ENCODE measurements at regions of chr1 and their contacts with region 1.

Region 1: DNA sequence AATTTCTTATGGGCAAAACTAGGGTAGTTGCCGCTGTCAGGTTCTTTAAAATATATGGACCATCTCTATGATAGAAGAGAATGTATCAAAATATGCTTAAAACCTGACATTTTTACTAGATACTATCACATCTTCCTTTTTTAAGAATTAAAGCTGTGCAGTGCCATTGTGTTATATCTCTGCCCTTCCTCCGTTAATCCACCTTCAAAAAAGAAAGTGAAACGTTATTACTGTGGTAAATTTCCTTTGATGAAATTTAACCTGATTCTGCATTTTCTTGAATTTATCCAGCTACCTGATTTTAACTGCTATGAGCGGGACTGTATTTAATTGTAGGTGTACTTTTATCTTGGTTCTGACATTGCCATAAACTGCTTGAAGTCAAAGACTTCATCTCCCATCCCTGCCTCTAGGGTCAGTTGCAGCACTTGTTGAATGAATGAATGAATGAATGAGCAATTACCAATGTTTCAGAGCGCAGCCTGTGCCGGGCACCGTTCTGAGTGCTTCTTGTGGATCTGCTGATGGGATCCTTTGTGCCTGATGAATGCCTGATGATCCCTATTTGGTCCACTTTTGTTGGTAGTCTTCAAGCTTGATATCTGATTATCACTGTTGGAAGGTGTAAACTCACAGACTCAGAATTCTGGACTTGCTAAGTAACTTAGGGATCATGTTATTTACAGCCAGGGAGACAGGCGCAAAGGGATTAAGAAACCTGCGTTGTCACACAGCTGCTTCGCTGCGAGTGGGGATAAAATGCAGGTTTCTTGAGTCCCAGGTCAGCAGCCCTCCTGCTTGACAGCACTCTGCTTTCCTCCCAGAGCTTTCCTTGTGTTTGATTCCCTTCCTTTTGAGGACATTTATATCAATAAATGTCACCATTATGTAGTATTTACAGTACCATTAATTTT is 30.1 kb downstream of the SMYD2 start:
- DNase-seq: no peak
- H3K4me3 Mint-ChIP-seq: peak overlapping the region; percentile 69
- H3K27ac Mint-ChIP-seq: no peak overlapping the region
- H3K4me1 Mint-ChIP-seq: peaks cover 24% of the 10 kb centered on the region
- H3K27me3 Mint-ChIP-seq: no peaks in the 10 kb centered on the region

Region 2: DNA sequence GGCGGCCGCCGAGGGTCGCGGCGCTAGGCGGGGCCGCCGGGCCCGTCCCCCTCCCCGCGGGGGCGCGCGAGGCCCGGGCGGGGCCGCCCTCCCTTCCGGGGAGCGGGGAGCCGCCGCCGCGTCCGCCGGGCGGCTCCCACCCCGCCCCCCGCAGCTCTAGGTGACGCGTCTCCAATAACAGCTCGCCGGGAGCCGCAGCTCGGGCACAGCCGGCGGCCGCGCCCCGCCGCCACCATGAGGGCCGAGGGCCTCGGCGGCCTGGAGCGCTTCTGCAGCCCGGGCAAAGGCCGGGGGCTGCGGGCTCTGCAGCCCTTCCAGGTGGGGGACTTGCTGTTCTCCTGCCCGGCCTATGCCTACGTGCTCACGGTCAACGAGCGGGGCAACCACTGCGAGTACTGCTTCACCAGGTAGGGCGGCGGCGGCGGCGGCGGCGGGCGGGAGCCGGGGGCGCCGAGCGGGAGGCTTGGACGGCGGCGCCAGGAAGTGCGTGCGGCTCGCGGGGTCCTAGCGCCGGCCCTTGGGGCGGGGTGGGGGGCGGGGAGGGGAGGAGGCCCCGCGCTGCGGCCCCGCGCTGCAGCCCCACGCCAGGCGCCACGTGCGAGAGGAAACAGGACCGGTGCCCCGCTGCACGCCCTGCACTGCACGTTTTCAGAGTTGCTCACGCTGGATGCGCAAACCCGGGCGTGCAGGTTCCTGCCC is 29.9 kb before region 1 on chr1 and contains the start of gene SMYD2:
- CTCF ChIA-PET with region 1: no interaction called
- POLR2A ChIA-PET with region 1: interaction called, 14 read pairs
- DNase-seq: peak; percentile 73
- H3K4me3 Mint-ChIP-seq: peak within 1 kb of the TSS; percentile 96
- H3K27ac Mint-ChIP-seq: peak within 1 kb of the TSS; percentile 72
- H3K4me1 Mint-ChIP-seq: peaks cover 41% of the 10 kb centered on the region
- H3K27me3 Mint-ChIP-seq: no peaks in the 10 kb centered on the region
- total RNA-seq, gene SMYD2: 33.8 to 34.9 TPM